Spleen (tissue), 13 donors: ENCODE measurements at regions of chr7 and their contacts with region 1.

Region 1: DNA sequence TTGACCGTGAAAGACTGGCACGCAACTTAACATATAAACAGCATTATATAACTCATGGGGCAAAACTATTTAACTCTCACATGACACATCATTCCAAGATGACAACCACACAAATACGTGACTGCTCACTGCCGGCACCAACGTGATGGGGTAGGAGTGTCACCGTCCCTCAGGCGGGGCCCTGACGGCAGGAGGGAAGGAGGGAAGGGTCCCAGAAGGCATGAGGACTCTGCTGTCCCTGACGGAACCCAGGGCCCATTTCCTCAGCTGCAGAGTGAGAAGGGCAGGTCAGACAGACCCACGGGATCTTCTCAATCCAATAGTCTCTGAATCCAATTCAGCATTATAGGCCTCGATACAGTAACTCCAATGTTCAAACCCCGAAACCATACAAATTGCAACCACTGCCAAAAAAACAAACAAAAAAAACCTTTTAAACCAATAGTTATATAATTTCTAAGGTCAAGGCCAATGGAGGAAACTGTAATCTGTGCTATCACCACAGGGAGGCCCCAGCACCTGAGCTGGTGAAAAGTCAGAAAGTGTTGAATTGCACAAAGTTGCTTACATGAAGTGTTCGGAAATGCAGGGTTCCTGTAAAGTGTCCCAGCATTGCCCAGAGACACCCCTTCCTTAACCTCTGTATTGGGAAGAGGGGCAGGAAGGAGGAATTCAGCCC is 137.4 kb downstream of the TNS3 start:
- DNase-seq: no peak
- H3K4me3 ChIP-seq: no peak overlapping the region
- H3K27ac ChIP-seq: peak overlapping the region in 5 of 8 donors; percentile 0 to 52 (median 40)
- H3K4me1 ChIP-seq: peaks cover 0 to 72% (median 26%) of the 10 kb centered on the region in 6 donors
- H3K27me3 ChIP-seq: no peaks in the 10 kb centered on the region
- CTCF ChIP-seq: peak in 10 of 11 experiments; percentile 43 to 68 (median 54)
- POLR2A ChIP-seq: no peak

Region 2: DNA sequence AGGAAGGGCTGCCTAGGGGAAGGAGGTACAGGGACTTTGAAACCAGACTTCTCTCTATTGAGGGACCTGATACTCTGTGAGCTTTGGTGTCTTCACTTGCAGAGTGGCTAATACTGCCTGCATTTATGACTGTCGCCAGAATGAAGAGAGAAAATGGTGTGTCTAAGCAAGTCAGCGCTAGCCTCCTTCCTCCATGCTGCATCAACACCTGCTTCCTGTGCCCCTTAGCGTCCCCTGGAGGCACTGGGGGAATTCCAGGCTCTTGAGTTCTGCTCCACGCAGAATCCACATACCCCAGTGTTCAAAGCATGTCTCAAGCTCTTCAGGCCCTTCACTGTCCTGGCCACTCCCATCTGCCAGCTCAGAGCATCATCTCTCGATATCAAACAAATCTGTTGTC is 363.2 kb after region 1 on chr7:
- intact Hi-C with region 1: loop called (anchors 5 kb)
- DNase-seq: no peak
- H3K4me3 ChIP-seq: peak overlapping the region in 4 of 8 donors; percentile 13 to 53 (median 27)
- H3K27ac ChIP-seq: peak overlapping the region in 4 of 8 donors; percentile 76 to 81 (median 80)
- H3K4me1 ChIP-seq: peaks cover 7 to 54% (median 34%) of the 10 kb centered on the region in 6 donors
- H3K27me3 ChIP-seq: no peaks in the 10 kb centered on the region
- CTCF ChIP-seq: peak in 1 of 11 experiments; percentile 18
- POLR2A ChIP-seq: no peak